MCF 10A (cell line): ENCODE measurements at regions of chr4 and their contacts with region 1.

Region 1: GRCh38 chr4:139243448-139244365 is 36.3 kb downstream of the MGARP start:
- DNase-seq: peak; percentile 98
- H3K4me3 Mint-ChIP-seq: no peak overlapping the region
- H3K27ac Mint-ChIP-seq: peak overlapping the region; percentile 93
- H3K4me1 Mint-ChIP-seq: peaks cover 27% of the 10 kb centered on the region
- H3K27me3 Mint-ChIP-seq: no peaks in the 10 kb centered on the region
- CTCF ChIP-seq: no peak

Region 2: DNA sequence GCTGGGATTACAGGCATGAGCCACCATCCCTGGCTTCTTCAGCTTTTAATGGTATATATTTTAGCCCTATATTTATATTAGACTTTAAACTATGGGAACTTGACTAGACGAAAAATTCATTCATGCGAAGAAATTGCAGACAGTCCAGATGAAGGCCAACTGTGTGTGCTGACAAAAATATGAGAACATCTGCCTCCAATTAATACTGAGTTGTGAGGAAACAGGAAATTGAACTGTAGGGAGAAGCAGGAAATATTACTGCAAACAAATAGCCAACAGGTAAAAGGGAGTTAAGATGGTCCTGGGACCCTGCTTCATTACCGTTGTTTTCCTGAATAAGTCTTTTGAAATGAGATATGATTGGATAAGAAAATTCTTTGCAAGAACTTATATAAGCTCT is 10.0 kb after region 1 on chr4:
- CTCF ChIA-PET with region 1: interaction called, 12 read pairs
- POLR2A ChIA-PET with region 1: interaction called, 19 read pairs
- intact Hi-C with region 1: no loop called
- DNase-seq: no peak
- H3K4me3 Mint-ChIP-seq: no peak overlapping the region
- H3K27ac Mint-ChIP-seq: no peak overlapping the region
- H3K4me1 Mint-ChIP-seq: no peaks in the 10 kb centered on the region
- H3K27me3 Mint-ChIP-seq: no peaks in the 10 kb centered on the region
- CTCF ChIP-seq: no peak

Region 3: GRCh38 chr4:139266583-139267257 is 23.0 kb after region 1 on chr4:
- CTCF ChIA-PET with region 1: interaction called, 4 read pairs
- POLR2A ChIA-PET with region 1: interaction called, 34 read pairs
- intact Hi-C with region 1: no loop called
- DNase-seq: peak; percentile 53
- H3K4me3 Mint-ChIP-seq: peak overlapping the region; percentile 71
- H3K27ac Mint-ChIP-seq: peak overlapping the region; percentile 61
- H3K4me1 Mint-ChIP-seq: peaks cover 14% of the 10 kb centered on the region
- H3K27me3 Mint-ChIP-seq: no peaks in the 10 kb centered on the region
- CTCF ChIP-seq: no peak